ENCODE measurements at regions of chr1 and their contacts with region 1.

Region 1: GRCh38 chr1:200488375-200489165 is 78.7 kb upstream of the ZNF281 start:
- DNase-seq: peak; percentile 72
- H3K4me3 ChIP-seq: no peak overlapping the region
- H3K27ac ChIP-seq: no peak overlapping the region
- H3K4me1 ChIP-seq: peaks cover 10% of the 10 kb centered on the region
- H3K27me3 ChIP-seq: peaks cover 0 to 2% of the 10 kb centered on the region in 2 experiments
- CTCF ChIP-seq: peak; percentile 71 to 73
- POLR2A ChIP-seq: no peak

Region 2: DNA sequence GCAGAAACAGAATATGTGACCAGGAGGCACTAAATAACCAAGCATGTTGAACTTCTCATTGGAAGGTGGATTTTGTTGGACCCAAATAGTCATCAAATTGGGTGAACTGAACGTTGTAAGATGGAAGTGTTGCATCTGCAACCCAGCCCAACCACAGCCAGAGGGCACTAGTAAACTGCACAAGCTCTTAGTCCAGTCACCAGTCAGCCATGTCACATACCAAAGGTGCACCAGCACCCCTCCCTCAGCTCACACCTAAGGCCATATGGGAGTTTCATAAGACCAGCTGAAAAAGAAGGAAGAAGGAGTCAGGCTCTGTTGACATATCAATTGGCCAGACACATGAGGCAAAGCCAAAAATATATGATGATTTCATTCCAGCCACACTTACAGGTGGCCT is 942.8 kb before region 1 on chr1:
- CTCF ChIA-PET with region 1: no interaction called
- POLR2A ChIA-PET with region 1: no interaction called
- dilution Hi-C with region 1: no loop called
- intact Hi-C with region 1: loop called (anchors 1 kb)
- DNase-seq: peak; percentile 30
- H3K4me3 ChIP-seq: no peak overlapping the region
- H3K27ac ChIP-seq: no peak overlapping the region
- H3K4me1 ChIP-seq: no peaks in the 10 kb centered on the region
- H3K27me3 ChIP-seq: no peaks in the 10 kb centered on the region
- CTCF ChIP-seq: peak; percentile 17 to 49
- POLR2A ChIP-seq: no peak

Region 3: DNA sequence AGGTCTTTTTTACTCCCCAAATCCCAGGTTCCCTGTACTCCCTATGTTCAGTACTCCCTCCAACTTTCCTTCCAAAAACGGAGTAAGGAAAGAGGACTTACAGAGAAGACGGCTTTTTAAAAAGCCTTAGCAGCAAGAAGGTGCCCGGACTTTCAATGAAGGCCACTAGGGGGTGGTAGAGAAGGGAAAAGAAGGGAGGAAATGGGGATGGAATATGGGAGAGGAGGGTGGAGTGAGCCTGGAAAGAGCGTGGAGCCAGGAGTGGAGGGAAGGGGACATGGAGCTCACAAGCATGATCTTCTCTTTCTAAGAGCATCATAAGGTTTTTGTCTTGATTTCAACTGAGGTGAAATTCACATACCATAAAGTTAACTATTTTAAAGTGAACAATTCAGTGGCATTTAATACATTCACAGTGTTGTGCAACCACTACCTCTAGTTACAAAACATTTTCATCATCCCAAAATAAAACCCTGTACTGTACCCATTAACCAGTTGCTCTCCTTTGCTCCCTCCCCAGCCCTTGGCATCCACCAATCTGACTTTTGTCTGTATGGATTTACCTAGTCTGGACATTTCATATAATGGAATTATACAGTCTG is 208.7 kb before region 1 on chr1:
- CTCF ChIA-PET with region 1: interaction called, 51 read pairs
- POLR2A ChIA-PET with region 1: no interaction called
- dilution Hi-C with region 1: no loop called
- intact Hi-C with region 1: loop called (anchors 1 kb)
- DNase-seq: peak; percentile 74
- H3K4me3 ChIP-seq: no peak overlapping the region
- H3K27ac ChIP-seq: no peak overlapping the region
- H3K4me1 ChIP-seq: no peaks in the 10 kb centered on the region
- H3K27me3 ChIP-seq: peaks cover 3 to 5% of the 10 kb centered on the region in 2 experiments
- CTCF ChIP-seq: peak; percentile 66 to 69
- POLR2A ChIP-seq: no peak

Region 4: GRCh38 chr1:200336111-200336845 is 152.3 kb before region 1 on chr1:
- CTCF ChIA-PET with region 1: no interaction called
- POLR2A ChIA-PET with region 1: no interaction called
- dilution Hi-C with region 1: no loop called
- intact Hi-C with region 1: loop called (anchors 2 kb)
- DNase-seq: peak; percentile 55
- H3K4me3 ChIP-seq: no peak overlapping the region
- H3K27ac ChIP-seq: peak overlapping the region; percentile 49
- H3K4me1 ChIP-seq: peaks cover 13% of the 10 kb centered on the region
- H3K27me3 ChIP-seq: no peaks in the 10 kb centered on the region
- CTCF ChIP-seq: no peak
- POLR2A ChIP-seq: no peak

Region 5: DNA sequence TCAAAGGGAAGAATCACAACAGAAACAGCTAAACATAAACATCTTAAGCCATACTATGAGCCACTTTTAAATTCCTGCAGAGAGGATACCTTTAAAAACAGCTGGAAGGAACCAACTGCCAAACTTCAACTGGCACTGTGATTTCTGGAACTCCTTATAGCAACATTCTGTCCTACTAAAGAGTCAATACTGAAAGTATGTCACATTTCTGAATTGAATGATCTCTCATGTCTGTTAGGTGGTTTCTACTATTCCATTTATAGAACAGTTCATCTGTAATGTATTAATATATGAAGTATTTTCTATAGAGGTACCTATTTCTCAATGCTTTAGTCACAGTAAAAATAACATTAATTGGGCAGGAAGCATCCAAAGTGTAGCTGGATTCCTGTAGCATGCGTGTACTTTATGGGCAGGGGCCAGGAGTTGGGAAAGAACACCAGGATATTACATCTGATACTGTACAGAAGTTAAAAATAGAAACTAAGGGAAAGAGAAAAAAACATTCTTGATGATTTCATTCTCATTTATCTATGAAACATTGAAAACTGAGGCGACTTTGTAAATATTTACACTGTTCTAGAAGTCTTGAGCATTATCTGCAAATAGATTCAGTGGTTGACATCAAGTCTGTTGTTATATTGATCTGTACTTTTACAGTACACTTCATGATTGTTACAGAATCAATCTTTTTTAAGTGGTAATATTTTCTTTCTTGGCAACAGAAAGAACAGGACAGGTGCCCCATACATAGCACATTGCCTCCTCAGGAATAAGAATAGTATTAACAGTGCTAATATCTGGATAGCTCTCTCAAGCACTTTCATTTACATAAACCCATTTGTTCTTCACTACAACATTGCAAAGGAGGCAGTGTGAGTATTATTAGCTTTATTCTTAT is 72.6 kb before region 1 on chr1:
- CTCF ChIA-PET with region 1: interaction called, 11 read pairs
- POLR2A ChIA-PET with region 1: interaction called, 5 read pairs
- dilution Hi-C with region 1: no loop called
- intact Hi-C with region 1: loop called (anchors 1 kb)
- DNase-seq: peak; percentile 94
- H3K4me3 ChIP-seq: peak overlapping the region in 1 of 3 experiments; percentile 55
- H3K27ac ChIP-seq: peak overlapping the region; percentile 99
- H3K4me1 ChIP-seq: peaks cover 24% of the 10 kb centered on the region
- H3K27me3 ChIP-seq: no peaks in the 10 kb centered on the region
- CTCF ChIP-seq: no peak
- POLR2A ChIP-seq: no peak

Region 6: DNA sequence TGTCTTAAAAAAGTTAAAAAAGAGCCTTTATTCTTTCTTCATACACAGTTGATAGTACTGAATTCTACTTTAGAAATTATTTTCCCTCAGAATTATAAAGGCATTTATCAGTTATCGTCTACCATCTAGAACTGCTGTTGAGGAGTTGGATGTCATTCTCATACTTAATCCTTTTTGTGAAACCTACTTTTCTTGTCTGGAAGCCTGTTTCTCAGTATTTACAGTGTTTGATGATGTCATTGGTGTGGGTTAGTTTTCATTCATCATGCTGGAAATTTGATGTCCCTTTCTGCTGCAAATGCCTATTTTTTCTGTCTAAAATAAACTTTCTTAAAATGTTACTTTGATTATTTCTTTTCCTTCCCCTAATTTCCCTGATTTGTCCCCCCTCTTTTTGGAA is 56.0 kb before region 1 on chr1:
- CTCF ChIA-PET with region 1: no interaction called
- POLR2A ChIA-PET with region 1: no interaction called
- dilution Hi-C with region 1: no loop called
- intact Hi-C with region 1: no loop called
- DNase-seq: no peak
- H3K4me3 ChIP-seq: no peak overlapping the region
- H3K27ac ChIP-seq: no peak overlapping the region
- H3K4me1 ChIP-seq: no peaks in the 10 kb centered on the region
- H3K27me3 ChIP-seq: no peaks in the 10 kb centered on the region
- CTCF ChIP-seq: no peak
- POLR2A ChIP-seq: no peak

Region 7: DNA sequence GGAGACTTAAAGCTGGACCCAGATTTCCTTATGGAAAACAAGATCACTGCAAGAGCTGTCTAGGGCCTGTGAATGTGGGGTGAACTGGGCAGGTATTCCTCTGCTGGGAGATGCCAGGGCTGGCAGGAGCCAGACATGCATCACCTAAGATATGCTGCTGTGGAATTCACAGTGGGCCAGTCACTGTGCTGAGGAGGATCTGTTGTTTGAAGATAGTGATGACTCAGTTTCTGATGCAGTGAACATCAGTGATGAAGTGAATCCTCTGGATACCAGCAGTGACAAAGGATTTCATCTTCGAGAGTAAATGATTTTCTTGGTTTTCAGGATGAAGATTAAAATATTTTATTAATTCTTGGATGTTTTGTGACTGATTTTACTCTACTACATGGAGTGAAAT is 220.2 kb after region 1 on chr1:
- CTCF ChIA-PET with region 1: no interaction called
- POLR2A ChIA-PET with region 1: no interaction called
- dilution Hi-C with region 1: no loop called
- intact Hi-C with region 1: no loop called
- DNase-seq: no peak
- H3K4me3 ChIP-seq: no peak overlapping the region
- H3K27ac ChIP-seq: no peak overlapping the region
- H3K4me1 ChIP-seq: no peaks in the 10 kb centered on the region
- H3K27me3 ChIP-seq: peaks cover 0 to 1% of the 10 kb centered on the region in 2 experiments
- CTCF ChIP-seq: no peak
- POLR2A ChIP-seq: no peak